ENCODE measurements at regions of chr17 and their contacts with region 1.

Region 1: GRCh38 chr17:48878918-48879898 is 13.4 kb upstream of the ATP5MC1 start:
- DNase-seq: peak; percentile 48
- H3K4me3 ChIP-seq: no peak overlapping the region
- H3K27ac ChIP-seq: no peak overlapping the region
- H3K4me1 ChIP-seq: no peaks in the 10 kb centered on the region
- H3K27me3 ChIP-seq: no peaks in the 10 kb centered on the region
- CTCF ChIP-seq: peak; percentile 44 to 92 (median 82)
- POLR2A ChIP-seq: no peak

Region 2: DNA sequence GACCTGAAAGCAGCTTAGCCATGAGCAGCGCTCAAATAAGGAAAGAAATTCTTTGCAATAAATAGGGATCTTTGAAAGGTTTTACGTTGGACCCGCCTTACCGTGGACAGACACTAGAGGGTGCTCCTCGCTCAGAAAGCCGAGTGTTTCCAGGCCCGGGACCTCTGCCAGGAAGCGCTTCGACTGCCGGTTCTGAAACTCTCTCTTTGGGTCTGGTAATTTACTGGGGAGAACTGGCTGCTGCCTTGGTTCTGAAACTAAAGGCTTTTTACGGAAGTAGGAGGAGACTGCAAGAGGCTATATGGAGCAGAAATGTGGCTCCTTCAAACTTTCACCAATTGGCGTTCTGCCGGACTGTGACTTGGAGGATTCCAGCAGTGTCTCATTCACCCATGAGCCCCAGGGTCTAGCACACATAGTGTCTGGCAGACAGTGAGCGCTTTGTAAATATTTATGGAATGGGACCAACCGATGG is 207.5 kb before region 1 on chr17:
- intact Hi-C with region 1: loop called (anchors 5 kb)
- DNase-seq: peak; percentile 81
- H3K4me3 ChIP-seq: peak overlapping the region; percentile 9 to 20
- H3K27ac ChIP-seq: no peak overlapping the region
- H3K4me1 ChIP-seq: no peaks in the 10 kb centered on the region
- H3K27me3 ChIP-seq: no peaks in the 10 kb centered on the region
- CTCF ChIP-seq: peak; percentile 64 to 87 (median 83)
- POLR2A ChIP-seq: no peak

Region 3: GRCh38 chr17:48701864-48702532 is 177.2 kb before region 1 on chr17:
- intact Hi-C with region 1: no loop called
- DNase-seq: no peak
- H3K4me3 ChIP-seq: no peak overlapping the region
- H3K27ac ChIP-seq: no peak overlapping the region
- H3K4me1 ChIP-seq: no peaks in the 10 kb centered on the region
- H3K27me3 ChIP-seq: no peaks in the 10 kb centered on the region
- CTCF ChIP-seq: no peak
- POLR2A ChIP-seq: no peak

Region 4: DNA sequence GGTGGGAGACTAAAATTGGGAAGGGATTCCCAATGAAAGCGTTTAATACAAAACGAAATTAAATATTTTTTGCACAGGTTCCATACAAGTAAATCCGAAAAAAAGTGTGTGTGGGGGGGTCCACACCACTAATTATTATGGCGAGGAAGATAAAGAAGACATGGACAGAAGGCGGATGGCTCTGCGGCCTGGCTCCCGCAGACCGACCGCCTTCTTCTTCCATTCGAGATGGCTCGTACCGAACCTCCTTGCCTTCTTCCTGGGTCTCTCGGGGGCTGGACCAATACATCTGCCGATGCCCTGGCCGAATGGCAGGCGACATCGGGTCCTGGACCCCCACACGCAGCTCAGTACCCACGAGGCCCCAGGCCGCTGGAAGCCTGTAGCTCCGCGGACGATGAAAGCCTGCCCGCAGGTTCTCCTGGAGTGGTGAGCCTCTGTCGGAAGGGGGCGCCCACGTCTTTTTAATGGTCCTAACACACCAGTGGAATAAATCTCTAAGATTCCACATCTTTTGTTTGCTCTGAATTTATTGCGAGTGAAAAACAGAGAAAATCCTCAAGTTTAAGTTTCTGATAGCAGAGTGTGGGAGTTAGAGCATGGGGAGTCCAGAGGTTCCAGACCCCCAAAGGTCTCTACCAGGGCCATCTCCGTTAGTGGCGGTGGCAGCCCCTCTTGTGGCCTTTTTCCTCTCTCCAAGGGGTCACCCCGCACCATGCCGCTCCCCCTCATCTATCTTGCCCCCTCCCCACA is 154.8 kb before region 1 on chr17:
- intact Hi-C with region 1: loop called (anchors 10 kb)
- DNase-seq: peak; percentile 94
- H3K4me3 ChIP-seq: peak overlapping the region; percentile 55 to 63
- H3K27ac ChIP-seq: peak overlapping the region; percentile 97 to 98
- H3K4me1 ChIP-seq: peaks cover 5% of the 10 kb centered on the region
- H3K27me3 ChIP-seq: no peaks in the 10 kb centered on the region
- CTCF ChIP-seq: peak; percentile 66 to 87 (median 80)
- POLR2A ChIP-seq: no peak

Region 5: DNA sequence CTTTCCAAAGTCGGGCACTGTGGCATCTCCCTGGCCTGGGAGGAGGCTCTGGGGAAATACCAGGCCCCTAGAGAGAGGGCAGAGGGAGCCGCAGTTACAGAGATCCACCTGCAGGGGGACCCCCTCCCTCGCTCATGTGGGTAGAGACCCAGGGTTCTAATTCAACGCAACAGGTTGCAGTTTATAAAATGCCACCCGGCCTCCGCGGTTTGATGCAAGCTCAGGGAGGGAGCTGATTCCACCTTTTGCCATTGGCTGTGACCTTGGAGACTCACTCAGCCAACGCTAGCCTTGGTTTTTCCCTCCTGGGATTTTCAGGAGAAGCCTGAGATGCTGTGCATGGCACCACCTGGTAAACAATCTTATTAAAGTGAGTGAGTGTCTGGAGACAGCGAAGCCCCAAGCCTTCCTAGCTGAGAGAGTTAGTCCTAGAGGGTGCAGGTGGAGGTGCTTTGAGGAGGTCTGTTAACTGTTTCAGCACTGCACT is 74.2 kb before region 1 on chr17:
- intact Hi-C with region 1: loop called (anchors 1 kb)
- DNase-seq: peak; percentile 27
- H3K4me3 ChIP-seq: no peak overlapping the region
- H3K27ac ChIP-seq: no peak overlapping the region
- H3K4me1 ChIP-seq: no peaks in the 10 kb centered on the region
- H3K27me3 ChIP-seq: no peaks in the 10 kb centered on the region
- CTCF ChIP-seq: peak; percentile 83 to 86 (median 84)
- POLR2A ChIP-seq: no peak

Measured in prostate gland (tissue), 2 donors.